ENCODE measurements at regions of chr6 and their contacts with region 1.

Region 1: GRCh38 chr6:75770844-75771243 is 21.8 kb downstream of the MYO6 start:
- DNase-seq: no peak
- H3K4me3 ChIP-seq: no peak overlapping the region
- H3K27ac ChIP-seq: no peak overlapping the region
- H3K4me1 ChIP-seq: no peaks in the 10 kb centered on the region
- H3K27me3 ChIP-seq: no peaks in the 10 kb centered on the region
- CTCF ChIP-seq: no peak
- POLR2A ChIP-seq: no peak

Region 2: DNA sequence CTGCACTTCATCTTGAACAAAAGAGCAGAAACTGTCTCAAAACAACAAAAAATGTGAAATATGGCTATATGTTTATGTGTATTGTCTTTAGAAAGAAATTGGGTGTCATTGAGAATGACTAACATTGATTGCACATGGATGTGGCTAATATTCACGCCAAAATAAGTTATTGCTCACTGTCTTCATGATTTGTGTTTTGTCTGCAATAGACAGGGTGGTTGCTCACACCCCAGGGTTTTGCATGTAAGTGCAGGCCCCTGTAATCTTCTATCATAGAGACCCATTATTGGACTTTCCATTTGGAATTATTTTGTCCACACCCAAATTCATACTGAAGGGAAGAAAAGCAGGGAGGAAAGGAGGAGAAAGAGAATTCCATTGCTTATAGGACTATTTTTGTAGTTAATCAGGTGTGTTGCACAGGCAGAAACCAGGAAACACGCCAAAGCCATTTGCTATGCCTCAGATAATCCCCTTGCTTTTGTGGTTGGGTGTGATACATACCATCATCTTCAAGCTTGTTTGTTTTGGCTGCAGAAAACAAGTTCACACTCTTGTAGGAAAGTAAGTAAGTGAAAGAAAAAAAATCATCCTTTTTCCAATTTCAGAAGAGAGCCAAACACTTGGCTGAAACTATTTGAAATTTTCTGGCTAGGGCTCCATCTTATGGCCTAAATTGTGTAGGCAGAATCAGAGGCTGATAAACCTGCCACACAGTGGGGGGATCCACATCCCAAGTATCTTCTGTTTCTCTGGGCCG is 779.1 kb before region 1 on chr6:
- intact Hi-C with region 1: loop called (anchors 5 kb)
- DNase-seq: no peak
- H3K4me3 ChIP-seq: no peak overlapping the region
- H3K27ac ChIP-seq: no peak overlapping the region
- H3K4me1 ChIP-seq: no peaks in the 10 kb centered on the region
- H3K27me3 ChIP-seq: no peaks in the 10 kb centered on the region
- CTCF ChIP-seq: no peak
- POLR2A ChIP-seq: no peak

Region 3: DNA sequence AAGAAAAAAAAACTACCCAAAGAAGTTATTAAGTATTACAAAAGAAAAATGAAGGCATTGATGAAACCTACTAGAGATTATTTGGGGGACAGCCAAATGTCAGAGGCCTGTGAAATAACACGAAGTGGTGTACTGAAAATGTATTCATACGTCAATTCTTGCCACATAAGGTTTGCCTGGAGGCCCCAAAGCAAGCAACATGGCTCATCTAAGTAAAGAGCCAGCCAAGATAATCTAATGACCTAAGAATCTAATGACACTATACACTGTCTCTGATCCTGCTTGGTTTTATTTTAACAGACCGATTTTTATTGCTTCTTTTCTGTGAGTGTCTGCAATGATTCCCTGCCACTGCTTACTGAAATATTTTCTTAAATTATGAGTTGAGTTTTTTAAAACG is 311.9 kb before region 1 on chr6:
- intact Hi-C with region 1: no loop called
- DNase-seq: no peak
- H3K4me3 ChIP-seq: no peak overlapping the region
- H3K27ac ChIP-seq: no peak overlapping the region
- H3K4me1 ChIP-seq: no peaks in the 10 kb centered on the region
- H3K27me3 ChIP-seq: no peaks in the 10 kb centered on the region
- CTCF ChIP-seq: no peak
- POLR2A ChIP-seq: no peak

Region 4: GRCh38 chr6:75759207-75759606 is 11.6 kb before region 1 on chr6:
- intact Hi-C with region 1: no loop called
- DNase-seq: no peak
- H3K4me3 ChIP-seq: no peak overlapping the region
- H3K27ac ChIP-seq: no peak overlapping the region
- H3K4me1 ChIP-seq: peaks cover 3% of the 10 kb centered on the region
- H3K27me3 ChIP-seq: no peaks in the 10 kb centered on the region
- CTCF ChIP-seq: no peak
- POLR2A ChIP-seq: no peak

Measured in vagina (tissue), 2 donors.